Mammary epithelial cell (primary cell): ENCODE measurements at regions of chr19 and their contacts with region 1.

Region 1: DNA sequence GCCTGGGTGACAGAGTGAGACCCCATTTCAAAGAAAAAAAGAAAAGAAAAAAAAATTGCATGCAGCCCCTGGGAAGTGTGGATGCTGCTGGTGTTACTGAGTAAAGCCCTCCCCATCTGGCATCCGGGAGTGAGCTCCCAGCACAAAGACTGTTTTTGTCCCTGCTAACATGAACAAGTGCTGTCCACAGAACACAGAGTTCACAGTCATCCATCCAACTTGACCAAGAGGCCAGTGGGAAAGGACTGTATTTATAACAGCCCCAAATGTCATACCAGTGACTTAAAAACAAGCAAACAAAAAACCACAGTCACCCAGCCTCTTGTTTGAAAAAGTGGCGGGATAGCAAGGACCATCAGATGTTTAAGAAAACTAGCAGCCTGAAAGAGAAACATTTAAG is 10.8 kb downstream of the FBXO17 start:
- DNase-seq: no peak
- H3K4me3 ChIP-seq: no peak overlapping the region
- H3K27ac ChIP-seq: no peak overlapping the region
- H3K4me1 ChIP-seq: peaks cover 4% of the 10 kb centered on the region
- H3K27me3 ChIP-seq: no peaks in the 10 kb centered on the region
- CTCF ChIP-seq: no peak

Region 2: GRCh38 chr19:39024875-39025641 is 60.3 kb after region 1 on chr19:
- CTCF ChIA-PET with region 1: no interaction called
- dilution Hi-C with region 1: no loop called
- in situ Hi-C with region 1: loop called in 1 of 2 experiments (anchors 5 kb)
- intact Hi-C with region 1: no loop called
- DNase-seq: no peak
- H3K4me3 ChIP-seq: no peak overlapping the region
- H3K27ac ChIP-seq: no peak overlapping the region
- H3K4me1 ChIP-seq: no peaks in the 10 kb centered on the region
- H3K27me3 ChIP-seq: no peaks in the 10 kb centered on the region
- CTCF ChIP-seq: no peak

Region 3: GRCh38 chr19:39031368-39032062 is 66.8 kb after region 1 on chr19:
- CTCF ChIA-PET with region 1: no interaction called
- dilution Hi-C with region 1: no loop called
- in situ Hi-C with region 1: loop called in 1 of 2 experiments (anchors 5 kb)
- intact Hi-C with region 1: loop called (anchors 1 kb)
- DNase-seq: peak; percentile 96
- H3K4me3 ChIP-seq: peak overlapping the region; percentile 77 to 90 (median 79)
- H3K27ac ChIP-seq: peak overlapping the region; percentile 36
- H3K4me1 ChIP-seq: peaks cover 23% of the 10 kb centered on the region
- H3K27me3 ChIP-seq: no peaks in the 10 kb centered on the region
- CTCF ChIP-seq: no peak

Region 4: DNA sequence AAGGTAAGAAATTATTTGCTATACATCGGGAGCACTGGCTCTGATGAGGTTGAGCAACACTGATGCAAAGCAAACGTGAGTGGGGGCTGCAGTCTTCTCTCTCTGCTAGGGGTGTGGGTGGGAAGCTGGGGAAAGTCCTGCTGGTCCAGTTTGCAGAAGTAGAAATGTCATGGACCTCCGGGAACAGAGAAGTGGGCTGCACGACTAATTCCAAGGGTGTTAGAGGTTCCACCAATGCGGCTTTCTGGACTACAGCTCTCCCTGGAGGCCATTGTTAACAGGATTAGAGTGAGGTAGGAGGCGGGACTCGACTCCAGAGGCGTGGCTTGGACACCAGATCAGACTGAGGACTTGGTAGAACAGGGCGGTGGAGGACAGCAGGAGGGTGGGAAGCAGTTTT is 73.4 kb after region 1 on chr19:
- CTCF ChIA-PET with region 1: no interaction called
- dilution Hi-C with region 1: no loop called
- in situ Hi-C with region 1: no loop called
- intact Hi-C with region 1: loop called (anchors 1 kb)
- DNase-seq: peak; percentile 49
- H3K4me3 ChIP-seq: no peak overlapping the region
- H3K27ac ChIP-seq: no peak overlapping the region
- H3K4me1 ChIP-seq: peaks cover 2% of the 10 kb centered on the region
- H3K27me3 ChIP-seq: no peaks in the 10 kb centered on the region
- CTCF ChIP-seq: peak in 1 of 2 donors; percentile 65

Region 5: DNA sequence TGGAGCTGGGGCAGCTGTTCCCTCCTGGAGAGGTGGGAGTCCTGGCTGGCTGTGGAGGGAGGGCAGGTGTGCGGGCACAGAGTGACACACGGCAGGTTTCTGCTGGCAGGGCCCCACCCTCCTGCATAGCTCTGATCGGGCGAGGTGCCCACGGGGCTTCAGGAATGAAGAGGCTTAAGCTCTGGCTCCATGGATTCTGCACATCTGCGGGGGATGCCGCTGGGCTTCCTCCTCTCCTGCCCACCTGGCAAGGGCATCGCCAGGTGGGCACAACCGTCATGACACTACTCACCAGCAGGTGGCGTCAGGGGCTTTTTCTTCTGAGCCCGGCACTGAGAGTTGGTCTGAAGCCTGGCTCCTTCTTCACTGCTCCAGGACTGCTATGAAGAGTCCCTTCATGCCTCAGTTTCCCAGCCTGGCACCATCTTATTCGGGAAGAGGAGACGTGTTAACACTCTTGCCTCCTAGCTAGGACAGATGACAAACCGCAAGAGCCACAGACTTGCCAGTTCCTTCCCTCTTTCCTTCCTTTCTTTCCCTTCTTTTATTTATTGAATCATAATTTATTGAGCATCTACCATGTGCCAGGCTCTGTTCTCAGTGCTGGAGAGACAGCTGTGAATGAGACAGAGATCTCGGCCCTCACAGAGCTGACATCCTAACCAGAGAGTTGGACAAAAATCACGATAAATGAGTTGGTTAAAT is 145.7 kb after region 1 on chr19:
- CTCF ChIA-PET with region 1: no interaction called
- dilution Hi-C with region 1: no loop called
- in situ Hi-C with region 1: no loop called
- intact Hi-C with region 1: loop called (anchors 2 kb)
- DNase-seq: no peak
- H3K4me3 ChIP-seq: no peak overlapping the region
- H3K27ac ChIP-seq: no peak overlapping the region
- H3K4me1 ChIP-seq: peaks cover 15% of the 10 kb centered on the region
- H3K27me3 ChIP-seq: no peaks in the 10 kb centered on the region
- CTCF ChIP-seq: peak; percentile 70 to 85

Region 6: GRCh38 chr19:39177110-39177699 is 212.5 kb after region 1 on chr19:
- CTCF ChIA-PET with region 1: no interaction called
- dilution Hi-C with region 1: no loop called
- in situ Hi-C with region 1: no loop called
- intact Hi-C with region 1: no loop called
- DNase-seq: no peak
- H3K4me3 ChIP-seq: no peak overlapping the region
- H3K27ac ChIP-seq: no peak overlapping the region
- H3K4me1 ChIP-seq: no peaks in the 10 kb centered on the region
- H3K27me3 ChIP-seq: no peaks in the 10 kb centered on the region
- CTCF ChIP-seq: no peak

Region 7: DNA sequence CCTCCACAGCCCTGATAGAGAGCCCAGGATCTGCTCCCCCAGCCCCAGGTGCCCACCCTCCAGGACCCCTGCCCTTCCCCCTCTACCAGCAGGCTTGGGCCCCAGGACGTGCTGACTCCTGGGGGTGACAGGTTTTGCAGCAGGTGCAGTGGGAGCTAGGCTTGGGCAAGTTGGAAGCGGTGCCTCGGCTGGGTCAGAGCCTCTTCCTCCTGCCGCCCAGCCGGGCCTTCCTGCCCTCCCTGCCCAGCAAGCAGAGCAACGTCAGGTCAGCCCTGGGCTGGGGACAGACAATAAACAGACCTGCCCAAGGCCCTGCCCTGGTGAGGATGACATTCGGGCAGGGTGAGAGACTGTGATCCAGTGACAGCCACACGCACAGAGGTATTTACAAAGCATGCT is 222.8 kb after region 1 on chr19:
- CTCF ChIA-PET with region 1: no interaction called
- dilution Hi-C with region 1: no loop called
- in situ Hi-C with region 1: no loop called
- intact Hi-C with region 1: loop called (anchors 1 kb)
- DNase-seq: no peak
- H3K4me3 ChIP-seq: no peak overlapping the region
- H3K27ac ChIP-seq: no peak overlapping the region
- H3K4me1 ChIP-seq: no peaks in the 10 kb centered on the region
- H3K27me3 ChIP-seq: no peaks in the 10 kb centered on the region
- CTCF ChIP-seq: no peak